Posterior cingulate gyrus (tissue), 11 donors: ENCODE measurements at regions of chr11 and their contacts with region 1.

Region 1: GRCh38 chr11:95254131-95254704 is 23.2 kb upstream of the SESN3 start:
- DNase-seq: peak; percentile 71 to 97 (median 83)

Region 2: DNA sequence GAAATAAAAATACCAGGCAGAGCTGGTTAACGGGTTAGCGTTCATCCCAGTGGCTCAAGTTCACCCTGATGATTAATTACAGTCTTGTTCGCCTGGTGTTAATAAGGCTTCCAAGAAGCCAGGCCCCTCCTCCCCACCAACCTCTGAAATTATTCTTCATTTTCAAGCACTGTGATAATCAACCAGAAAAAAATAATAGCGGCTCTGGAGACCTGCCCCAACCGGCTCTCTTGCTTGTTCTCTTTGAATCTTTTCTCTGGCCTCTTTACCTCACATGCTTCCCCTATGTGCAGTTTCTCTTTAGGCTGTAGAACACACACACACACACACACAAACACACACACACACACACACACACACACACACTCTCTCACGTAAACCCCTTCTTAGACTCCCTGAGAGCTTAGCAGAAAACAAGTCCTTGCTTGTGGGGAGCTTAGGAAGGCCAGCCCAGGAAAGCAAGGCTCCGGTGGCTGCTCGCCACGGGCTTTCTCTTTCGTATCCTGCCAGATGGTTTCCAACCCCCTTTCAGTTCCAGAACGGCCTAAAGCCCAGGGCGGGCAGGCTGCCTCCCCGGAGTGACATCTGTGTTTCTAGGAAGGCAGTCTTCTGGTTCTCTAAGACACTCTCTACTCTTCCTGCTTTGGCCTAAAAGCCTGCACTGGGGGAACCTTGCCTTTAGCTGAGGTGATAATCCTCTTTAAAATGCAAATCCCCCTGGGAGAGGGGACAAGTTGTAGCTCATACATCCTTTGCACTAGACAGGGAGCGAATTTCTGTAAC is 83.1 kb after region 1 on chr11:
- intact Hi-C with region 1: loop called (anchors 10 kb)
- DNase-seq: peak; percentile 27 to 93 (median 58)